Activated T-helper 2 cell treated with anti-CD3 and anti-CD28 coated beads, Interferon-gamma antibody, Interleukin-2, Interleukin-4, amounts not matched to agents 10 μg/mL and 5 μg/mL and 100 μg/mL, durations not matched to agents 14 hours and 24 hours and 36 hours (primary cell): ENCODE measurements at regions of chr2 and their contacts with region 1.

Region 1: DNA sequence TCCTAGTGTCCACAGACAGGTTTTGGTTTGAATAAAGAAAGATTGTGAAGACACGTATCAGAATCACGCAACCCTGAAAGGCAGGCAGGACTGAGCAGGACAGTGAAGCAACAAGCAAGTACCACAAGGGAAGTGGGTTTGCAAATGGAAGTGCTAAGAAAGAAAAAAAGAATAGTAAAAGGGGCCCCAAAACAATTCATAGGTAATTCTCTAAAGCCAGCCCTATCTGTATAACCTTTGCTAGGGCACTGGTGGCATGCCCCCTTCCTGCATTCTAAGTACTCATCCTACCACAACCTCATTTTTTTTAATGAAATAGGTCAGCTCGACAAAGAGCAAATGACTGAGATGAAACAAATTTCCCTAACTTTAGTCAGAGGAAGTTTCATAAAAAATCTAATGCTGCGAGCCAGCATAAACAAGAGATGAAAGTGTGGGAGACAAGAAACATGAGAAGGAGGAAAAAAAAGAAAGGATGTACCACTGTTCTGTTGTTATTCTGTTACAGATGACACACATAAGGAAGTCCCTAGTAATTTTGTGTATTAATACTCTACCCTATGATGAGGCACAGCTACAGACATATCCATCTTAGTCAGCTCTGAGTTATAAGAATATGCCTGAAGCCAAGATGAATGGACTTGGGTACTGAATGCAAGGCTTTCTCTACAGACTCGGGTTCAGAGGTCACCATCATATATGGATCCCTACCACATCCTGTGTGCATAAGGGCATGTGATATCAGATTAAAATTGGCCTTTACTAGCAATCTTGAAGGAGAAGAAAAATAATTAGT is 32.2 kb downstream of the IKZF2 start:
- DNase-seq: no peak
- H3K4me3 Mint-ChIP-seq: peak overlapping the region; percentile 63
- H3K27ac Mint-ChIP-seq: peak overlapping the region; percentile 95
- H3K4me1 Mint-ChIP-seq: peaks cover 50% of the 10 kb centered on the region
- H3K27me3 Mint-ChIP-seq: peaks cover 4% of the 10 kb centered on the region

Region 2: GRCh38 chr2:212811036-212811805 is 308.0 kb before region 1 on chr2:
- intact Hi-C with region 1: loop called (anchors 2 kb)
- DNase-seq: no peak
- H3K4me3 Mint-ChIP-seq: no peak overlapping the region
- H3K27ac Mint-ChIP-seq: no peak overlapping the region
- H3K4me1 Mint-ChIP-seq: peaks cover 14% of the 10 kb centered on the region
- H3K27me3 Mint-ChIP-seq: peaks cover 13% of the 10 kb centered on the region

Region 3: GRCh38 chr2:212928681-212929080 is 190.6 kb before region 1 on chr2:
- intact Hi-C with region 1: loop called (anchors 1 kb)
- DNase-seq: no peak
- H3K4me3 Mint-ChIP-seq: no peak overlapping the region
- H3K27ac Mint-ChIP-seq: no peak overlapping the region
- H3K4me1 Mint-ChIP-seq: peaks cover 38% of the 10 kb centered on the region
- H3K27me3 Mint-ChIP-seq: no peaks in the 10 kb centered on the region

Region 4: GRCh38 chr2:213015387-213016165 is 103.7 kb before region 1 on chr2:
- intact Hi-C with region 1: loop called (anchors 1 kb)
- DNase-seq: peak; percentile 51
- H3K4me3 Mint-ChIP-seq: no peak overlapping the region
- H3K27ac Mint-ChIP-seq: peak overlapping the region; percentile 33
- H3K4me1 Mint-ChIP-seq: peaks cover 44% of the 10 kb centered on the region
- H3K27me3 Mint-ChIP-seq: peaks cover 27% of the 10 kb centered on the region

Region 5: DNA sequence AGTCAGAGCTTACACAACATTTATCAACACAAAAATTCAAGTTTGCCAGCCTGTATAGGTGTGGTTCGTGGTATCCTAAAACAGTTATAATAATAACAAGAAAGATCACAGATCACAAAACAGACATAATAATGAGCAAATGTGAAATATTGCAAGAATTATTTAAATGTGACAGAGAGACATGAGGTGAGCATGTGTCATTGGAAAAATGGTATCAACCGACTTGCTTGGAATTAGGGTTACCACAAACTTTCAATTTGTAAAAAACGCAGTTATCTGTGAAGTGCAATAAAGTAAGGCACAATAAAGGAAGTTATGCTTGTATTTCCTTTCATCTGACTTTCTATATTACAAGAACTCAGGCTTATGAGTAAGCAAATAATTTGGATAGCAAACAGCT is 84.7 kb before region 1 on chr2:
- intact Hi-C with region 1: loop called (anchors 1 kb)
- DNase-seq: no peak
- H3K4me3 Mint-ChIP-seq: no peak overlapping the region
- H3K27ac Mint-ChIP-seq: peak overlapping the region; percentile 72
- H3K4me1 Mint-ChIP-seq: peaks cover 25% of the 10 kb centered on the region
- H3K27me3 Mint-ChIP-seq: peaks cover 14% of the 10 kb centered on the region